ENCODE measurements at regions of chr11 and their contacts with region 1.

Region 1: GRCh38 chr11:9460322-9461067 is at the start of gene ZNF143:
- DNase-seq: peak; percentile 100
- H3K4me3 Mint-ChIP-seq: peak within 1 kb of the TSS; percentile 98
- H3K27ac Mint-ChIP-seq: peak within 1 kb of the TSS; percentile 97
- H3K4me1 Mint-ChIP-seq: peaks cover 27% of the 10 kb centered on the region
- H3K27me3 Mint-ChIP-seq: no peaks in the 10 kb centered on the region
- total RNA-seq, gene ZNF143: 30.3 and 30.7 TPM in 2 replicates

Region 2: DNA sequence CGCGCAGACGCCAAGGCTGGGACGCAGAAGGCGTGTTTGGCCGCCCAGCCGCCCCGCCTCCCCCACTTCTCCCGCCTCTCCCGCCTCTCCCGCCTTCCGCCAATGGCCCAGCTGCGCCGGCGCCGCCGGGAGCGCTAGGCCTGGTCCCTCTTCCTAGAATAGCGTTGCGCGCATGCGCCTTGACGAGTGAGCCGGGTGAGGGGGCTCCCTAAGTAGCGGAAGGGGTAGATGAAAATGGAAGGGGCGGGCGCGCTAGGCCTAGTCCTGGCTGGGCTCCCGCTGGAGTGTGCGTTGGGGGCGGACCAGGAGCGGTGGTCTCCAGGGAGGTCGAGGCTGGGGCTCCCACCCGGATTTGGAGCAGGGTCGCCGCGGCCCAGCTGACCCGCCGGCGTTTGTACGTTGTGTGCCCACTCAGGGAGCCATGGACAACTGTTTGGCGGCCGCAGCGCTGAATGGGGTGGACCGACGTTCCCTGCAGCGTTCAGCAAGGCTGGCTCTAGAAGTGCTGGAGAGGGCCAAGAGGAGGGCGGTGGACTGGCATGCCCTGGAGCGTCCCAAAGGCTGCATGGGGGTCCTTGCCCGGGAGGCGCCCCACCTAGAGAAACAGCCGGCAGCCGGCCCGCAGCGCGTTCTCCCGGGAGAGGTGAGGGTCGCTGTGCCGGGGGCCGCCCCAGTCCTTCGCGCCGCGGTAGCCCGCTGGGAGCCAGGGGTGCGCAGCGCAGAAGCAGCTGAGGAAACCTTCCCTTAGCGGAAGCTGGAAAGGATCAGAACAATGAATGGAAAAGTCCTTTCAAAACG is 549.3 kb before region 1 on chr11 and contains the start of gene AKIP1:
- intact Hi-C with region 1: loop called (anchors 2 kb)
- DNase-seq: peak; percentile 77
- H3K4me3 Mint-ChIP-seq: peak within 1 kb of the TSS; percentile 97
- H3K27ac Mint-ChIP-seq: peak within 1 kb of the TSS; percentile 87
- H3K4me1 Mint-ChIP-seq: peaks cover 45% of the 10 kb centered on the region
- H3K27me3 Mint-ChIP-seq: peaks cover 12% of the 10 kb centered on the region
- total RNA-seq, gene AKIP1: 33.4 and 36.9 TPM in 2 replicates

Region 3: GRCh38 chr11:9210922-9211320 is 249.6 kb before region 1 on chr11:
- intact Hi-C with region 1: loop called (anchors 5 kb)
- DNase-seq: no peak
- H3K4me3 Mint-ChIP-seq: peak overlapping the region; percentile 41
- H3K27ac Mint-ChIP-seq: peak overlapping the region; percentile 21
- H3K4me1 Mint-ChIP-seq: peaks cover 63% of the 10 kb centered on the region
- H3K27me3 Mint-ChIP-seq: peaks cover 2% of the 10 kb centered on the region

Region 4: GRCh38 chr11:9314291-9315036 is 146.0 kb before region 1 on chr11 and contains the start of gene TMEM41B:
- intact Hi-C with region 1: loop called (anchors 1 kb)
- DNase-seq: peak; percentile 98
- H3K4me3 Mint-ChIP-seq: peak within 1 kb of the TSS; percentile 99
- H3K27ac Mint-ChIP-seq: peak within 1 kb of the TSS; percentile 97
- H3K4me1 Mint-ChIP-seq: peaks cover 37% of the 10 kb centered on the region
- H3K27me3 Mint-ChIP-seq: peaks cover 11% of the 10 kb centered on the region
- total RNA-seq, gene TMEM41B: 26.1 and 28.8 TPM in 2 replicates

Region 5: DNA sequence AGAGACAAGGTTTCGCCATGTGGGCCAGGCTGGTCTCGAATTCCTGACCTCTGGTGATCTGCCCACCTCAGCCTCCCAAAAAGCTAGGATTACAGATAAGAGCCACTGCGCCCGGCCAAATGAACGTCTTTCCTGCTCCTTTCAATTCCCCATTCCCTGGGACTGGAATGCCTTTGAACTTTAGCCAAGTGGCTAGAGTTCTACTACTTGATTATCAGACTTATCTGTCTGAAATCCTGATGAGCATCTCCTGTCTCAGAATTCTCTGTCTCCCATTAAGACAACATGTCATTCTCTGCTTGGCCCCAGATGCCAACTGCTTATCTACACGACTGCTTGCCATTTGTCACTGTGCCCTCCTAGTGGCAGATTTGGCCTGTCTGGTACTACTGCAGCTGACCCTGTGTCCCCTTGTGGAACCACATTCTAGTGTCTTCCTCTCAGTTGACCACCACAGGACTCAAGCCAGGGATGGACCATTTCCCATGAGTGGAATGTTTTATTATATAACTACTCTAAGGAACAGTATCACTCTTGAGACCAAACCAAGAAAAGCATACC is 109.1 kb before region 1 on chr11:
- intact Hi-C with region 1: no loop called
- DNase-seq: no peak
- H3K4me3 Mint-ChIP-seq: no peak overlapping the region
- H3K27ac Mint-ChIP-seq: no peak overlapping the region
- H3K4me1 Mint-ChIP-seq: peaks cover 15% of the 10 kb centered on the region
- H3K27me3 Mint-ChIP-seq: peaks cover 14% of the 10 kb centered on the region

Region 6: DNA sequence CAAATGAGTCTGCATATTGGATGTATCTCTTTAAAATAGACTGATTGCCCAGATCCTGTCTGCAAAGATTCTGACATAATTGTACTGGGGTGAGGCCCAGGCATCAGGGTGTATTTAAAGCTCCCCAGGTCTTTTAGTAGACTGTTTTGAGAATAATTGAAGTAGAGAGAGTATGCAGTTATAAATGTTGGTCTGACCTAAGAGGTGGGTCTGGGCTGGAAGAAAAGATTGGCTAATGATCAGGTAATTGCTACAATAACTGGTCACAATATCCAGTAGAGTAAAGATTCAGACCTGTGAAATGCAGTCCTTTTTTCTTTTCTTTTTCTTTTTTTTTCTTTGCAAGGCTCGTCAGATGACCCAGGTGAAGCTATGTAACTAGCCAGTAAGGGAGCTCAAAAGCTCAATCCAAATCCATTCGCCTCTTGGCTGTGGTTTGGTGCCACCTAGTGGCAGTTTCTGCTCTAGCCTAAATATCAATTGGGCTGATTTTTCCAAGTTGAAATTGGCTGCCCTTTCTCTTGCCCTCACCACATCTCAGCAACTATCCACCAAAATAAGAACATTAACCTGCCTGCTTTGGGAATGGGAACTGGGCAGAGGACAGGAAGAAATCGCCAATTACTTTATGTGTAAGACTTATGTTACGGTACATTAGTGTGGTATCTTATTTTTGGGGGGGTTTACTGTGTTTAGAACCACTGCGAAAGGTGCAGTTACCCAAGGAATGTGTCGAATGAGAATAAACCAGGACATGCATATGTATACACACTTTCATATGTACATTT is 46.2 kb after region 1 on chr11:
- intact Hi-C with region 1: loop called (anchors 1 kb)
- DNase-seq: peak; percentile 68
- H3K4me3 Mint-ChIP-seq: no peak overlapping the region
- H3K27ac Mint-ChIP-seq: no peak overlapping the region
- H3K4me1 Mint-ChIP-seq: peaks cover 6% of the 10 kb centered on the region
- H3K27me3 Mint-ChIP-seq: no peaks in the 10 kb centered on the region

Region 7: GRCh38 chr11:9748361-9748970 is 288.0 kb after region 1 on chr11:
- intact Hi-C with region 1: loop called (anchors 5 kb)
- DNase-seq: peak; percentile 66
- H3K4me3 Mint-ChIP-seq: no peak overlapping the region
- H3K27ac Mint-ChIP-seq: no peak overlapping the region
- H3K4me1 Mint-ChIP-seq: peaks cover 34% of the 10 kb centered on the region
- H3K27me3 Mint-ChIP-seq: peaks cover 2% of the 10 kb centered on the region

Region 8: GRCh38 chr11:9982800-9983579 is 522.5 kb after region 1 on chr11:
- intact Hi-C with region 1: no loop called
- DNase-seq: no peak
- H3K4me3 Mint-ChIP-seq: no peak overlapping the region
- H3K27ac Mint-ChIP-seq: no peak overlapping the region
- H3K4me1 Mint-ChIP-seq: no peaks in the 10 kb centered on the region
- H3K27me3 Mint-ChIP-seq: no peaks in the 10 kb centered on the region